Activated naive CD8-positive, alpha-beta T cell treated with anti-CD3 and anti-CD28 coated beads, Interleukin-2, amount 10 ng/mL, durations not matched to agents 7 days and 5 days (primary cell): ENCODE measurements at regions of chr10 and their contacts with region 1.

Region 1: DNA sequence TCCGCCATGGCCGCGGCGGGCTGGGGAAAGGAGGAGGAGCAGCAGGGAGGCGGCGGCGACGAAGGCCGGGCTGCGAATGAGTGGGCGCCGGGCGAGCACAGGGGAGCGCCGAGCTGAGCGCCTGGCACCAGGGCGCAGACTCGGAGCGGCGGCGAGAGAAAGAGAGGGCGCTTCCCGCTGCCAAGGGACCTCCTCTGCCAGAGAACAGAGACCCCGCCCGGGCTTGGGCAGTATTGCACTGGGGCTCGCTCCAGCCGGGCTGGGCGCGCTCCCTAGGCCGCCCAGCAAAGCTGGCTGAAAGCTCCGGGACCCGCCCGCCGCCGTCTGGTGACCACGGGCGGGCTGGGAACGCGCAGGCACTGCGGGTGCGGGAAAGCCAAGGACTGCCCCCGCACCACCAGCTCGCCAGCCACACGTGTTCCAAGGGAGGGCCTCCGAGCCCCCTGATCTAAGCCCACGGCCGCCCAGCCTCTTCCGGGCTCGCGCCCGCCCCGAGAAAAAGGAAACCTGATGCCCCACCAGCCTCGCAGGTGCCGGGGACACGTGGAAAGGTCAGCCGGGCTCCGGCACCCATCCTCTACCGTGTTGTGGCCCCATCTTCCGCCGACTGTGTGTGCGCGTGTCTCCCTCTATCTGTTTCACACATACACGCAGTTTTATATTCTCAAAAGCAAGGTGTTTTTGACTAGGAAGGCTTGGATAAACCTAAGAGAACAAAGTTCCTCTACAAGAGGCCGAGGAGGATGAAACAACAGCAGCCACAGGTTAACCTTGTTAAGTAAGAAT is at the start of gene CCDC6:
- DNase-seq: peak; percentile 91
- ATAC-seq: peak; percentile 86
- H3K4me3 Mint-ChIP-seq: peak within 1 kb of the TSS; percentile 94
- H3K27ac Mint-ChIP-seq: peak within 1 kb of the TSS; percentile 96
- H3K4me1 Mint-ChIP-seq: peaks cover 46% of the 10 kb centered on the region
- H3K27me3 Mint-ChIP-seq: no peaks in the 10 kb centered on the region
- total RNA-seq, gene CCDC6: 20.4 to 21.4 TPM

Region 2: DNA sequence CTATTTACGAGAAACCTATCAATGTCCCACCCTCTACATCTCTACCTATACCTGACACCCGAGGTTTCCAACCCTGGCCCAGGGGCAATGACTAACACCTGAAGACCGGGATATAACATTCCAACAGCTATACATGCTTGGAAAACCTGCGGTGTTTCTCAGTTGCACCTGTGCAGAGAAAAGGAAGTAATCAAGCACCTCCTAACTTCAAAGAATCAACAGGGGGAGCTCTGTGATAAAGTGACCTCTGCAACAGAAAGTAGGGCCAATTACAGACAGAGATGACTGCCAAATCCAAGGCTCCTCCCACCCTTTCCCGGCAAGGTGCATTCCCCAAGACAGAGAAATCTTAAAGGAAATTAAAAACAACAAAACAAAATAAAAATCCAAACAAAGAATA is 41.5 kb before region 1 on chr10:
- POLR2A ChIA-PET with region 1: interaction called, 18 read pairs
- DNase-seq: no peak
- ATAC-seq: peak; percentile 67
- H3K4me3 Mint-ChIP-seq: peak overlapping the region; percentile 10
- H3K27ac Mint-ChIP-seq: no peak overlapping the region
- H3K4me1 Mint-ChIP-seq: peaks cover 32% of the 10 kb centered on the region
- H3K27me3 Mint-ChIP-seq: no peaks in the 10 kb centered on the region

Region 3: DNA sequence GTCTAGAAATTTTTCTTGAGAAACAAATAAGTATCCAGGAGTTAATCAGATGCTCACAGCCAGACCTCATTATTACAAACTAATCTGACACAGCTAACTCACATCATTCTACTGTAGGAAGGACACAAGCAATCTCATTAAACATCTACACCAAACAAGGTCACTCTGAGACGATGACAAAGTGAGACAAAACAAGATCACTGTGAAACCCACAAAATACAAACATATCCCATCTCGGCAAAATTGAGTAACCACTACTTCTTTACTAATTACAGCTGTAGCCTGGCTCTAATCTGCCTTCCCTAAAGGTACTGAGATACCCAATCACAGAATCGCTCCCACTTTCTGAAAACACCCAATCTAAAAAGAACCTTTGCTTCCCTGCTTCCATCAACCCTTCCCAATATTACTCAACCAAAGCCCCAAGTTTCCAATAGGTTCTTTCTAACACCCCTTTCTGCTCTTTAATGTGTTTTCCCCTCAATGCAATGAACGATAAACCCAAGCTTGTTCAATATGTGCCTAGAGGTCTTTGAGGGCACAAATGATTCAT is 27.2 kb before region 1 on chr10:
- POLR2A ChIA-PET with region 1: interaction called, 11 read pairs
- DNase-seq: no peak
- ATAC-seq: no peak
- H3K4me3 Mint-ChIP-seq: peak overlapping the region; percentile 57
- H3K27ac Mint-ChIP-seq: peak overlapping the region; percentile 69
- H3K4me1 Mint-ChIP-seq: peaks cover 50% of the 10 kb centered on the region
- H3K27me3 Mint-ChIP-seq: no peaks in the 10 kb centered on the region

Region 4: DNA sequence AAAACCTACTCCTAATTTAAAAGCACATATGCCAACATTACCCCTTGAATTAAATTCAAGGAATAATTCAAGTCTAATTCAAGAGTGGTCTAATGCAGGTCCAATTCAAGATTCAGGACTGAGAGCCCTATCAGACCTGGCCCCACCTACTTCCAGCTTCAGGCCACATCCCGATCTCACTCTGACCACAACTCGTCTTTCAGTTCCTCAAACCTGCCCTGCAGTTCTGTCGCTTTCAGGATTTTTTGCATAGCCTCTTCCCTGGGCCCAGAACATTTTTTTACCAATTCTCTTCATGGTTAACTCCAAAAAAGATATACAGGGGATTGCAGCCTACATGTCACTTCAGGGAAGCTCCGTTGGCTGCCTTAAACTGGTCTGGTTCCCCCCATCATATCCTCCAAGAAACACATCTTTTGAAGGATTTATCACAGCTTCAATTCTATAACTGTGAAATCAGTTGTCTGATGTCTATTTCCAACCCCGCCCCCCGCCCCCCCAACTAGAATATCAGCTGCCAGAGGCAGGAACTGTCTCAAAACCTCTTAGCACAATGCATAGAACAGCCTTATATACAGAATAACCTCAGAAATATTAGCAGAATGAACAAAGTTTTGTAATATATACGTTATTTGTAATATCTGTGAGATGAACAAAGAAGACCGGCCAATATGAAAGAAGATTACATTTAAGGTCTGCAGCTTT is 21.0 kb before region 1 on chr10:
- POLR2A ChIA-PET with region 1: interaction called, 12 read pairs
- DNase-seq: no peak
- ATAC-seq: no peak
- H3K4me3 Mint-ChIP-seq: peak overlapping the region; percentile 61
- H3K27ac Mint-ChIP-seq: peak overlapping the region; percentile 31
- H3K4me1 Mint-ChIP-seq: peaks cover 59% of the 10 kb centered on the region
- H3K27me3 Mint-ChIP-seq: no peaks in the 10 kb centered on the region

Region 5: GRCh38 chr10:59934701-59935100 is 28.1 kb after region 1 on chr10:
- POLR2A ChIA-PET with region 1: no interaction called
- DNase-seq: no peak
- ATAC-seq: no peak
- H3K4me3 Mint-ChIP-seq: no peak overlapping the region
- H3K27ac Mint-ChIP-seq: no peak overlapping the region
- H3K4me1 Mint-ChIP-seq: peaks cover 5% of the 10 kb centered on the region
- H3K27me3 Mint-ChIP-seq: peaks cover 2% of the 10 kb centered on the region